ENCODE measurements at regions of chr15 and their contacts with region 1.

Region 1: DNA sequence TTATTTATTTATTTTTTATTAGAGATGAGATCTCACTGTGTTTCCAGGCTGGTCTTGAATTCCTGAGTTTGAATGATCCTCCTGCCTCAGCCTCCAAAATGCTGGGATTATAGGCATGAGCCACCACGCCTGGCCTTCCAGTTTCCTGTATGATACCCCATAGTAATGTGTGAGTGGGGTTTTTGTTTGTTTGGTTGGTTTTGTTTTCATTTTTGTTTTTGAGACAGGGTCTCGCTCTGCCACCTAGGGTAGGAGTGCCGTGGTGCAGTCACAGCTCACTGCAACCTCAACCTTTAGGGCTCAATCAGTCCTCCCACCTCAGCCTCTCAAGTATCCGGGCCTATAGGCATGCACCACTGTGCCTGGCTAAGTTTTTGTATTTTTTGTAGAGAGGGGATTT is 30.9 kb downstream of the GOLM2 start:
- DNase-seq: peak; percentile 47
- ATAC-seq: peak; percentile 98
- H3K4me3 ChIP-seq: no peak overlapping the region
- H3K27ac ChIP-seq: peak overlapping the region; percentile 71
- H3K4me1 ChIP-seq: peaks cover 5% of the 10 kb centered on the region
- H3K27me3 ChIP-seq: no peaks in the 10 kb centered on the region
- CTCF ChIP-seq: peak; percentile 76 to 81 (median 80)
- EP300 ChIP-seq: no peak
- POLR2A ChIP-seq: no peak
- RAD21 ChIP-seq: peak; percentile 83

Region 2: GRCh38 chr15:43903864-43904290 is 415.5 kb before region 1 on chr15:
- CTCF ChIA-PET with region 1: interaction called, 32 read pairs
- POLR2A ChIA-PET with region 1: no interaction called
- RAD21 ChIA-PET with region 1: interaction called, 5 read pairs
- SMC1A ChIA-PET with region 1: interaction called, 15 read pairs
- in situ Hi-C with region 1: no loop called
- intact Hi-C with region 1: loop called (anchors 2 kb)
- DNase-seq: peak; percentile 7
- ATAC-seq: peak; percentile 97
- H3K4me3 ChIP-seq: no peak overlapping the region
- H3K27ac ChIP-seq: no peak overlapping the region
- H3K4me1 ChIP-seq: no peaks in the 10 kb centered on the region
- H3K27me3 ChIP-seq: no peaks in the 10 kb centered on the region
- CTCF ChIP-seq: peak; percentile 75 to 89 (median 82)
- EP300 ChIP-seq: no peak
- POLR2A ChIP-seq: no peak
- RAD21 ChIP-seq: peak; percentile 99

Region 3: DNA sequence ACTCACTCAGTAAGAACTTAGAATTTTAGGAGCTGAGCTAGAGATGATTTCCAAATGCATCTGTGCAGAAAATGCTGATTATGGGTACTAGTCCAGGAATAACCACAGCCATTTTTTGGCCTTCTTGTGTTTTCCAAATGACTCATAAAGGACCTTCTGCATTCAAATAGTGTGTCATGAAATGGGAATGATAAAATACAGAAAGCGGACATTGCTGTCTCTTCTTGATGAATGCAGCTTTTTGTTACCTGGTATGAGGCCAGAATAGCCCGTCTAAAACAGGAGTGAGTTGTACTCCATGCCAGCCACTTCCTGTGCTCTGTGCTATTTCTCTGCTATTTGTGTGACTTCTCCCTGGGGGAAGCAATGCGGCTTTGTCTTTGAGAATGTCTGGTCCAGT is 103.8 kb before region 1 on chr15:
- CTCF ChIA-PET with region 1: interaction called, 77 read pairs
- POLR2A ChIA-PET with region 1: no interaction called
- RAD21 ChIA-PET with region 1: interaction called, 9 read pairs
- SMC1A ChIA-PET with region 1: interaction called, 60 read pairs
- in situ Hi-C with region 1: no loop called
- intact Hi-C with region 1: loop called (anchors 1 kb)
- DNase-seq: no peak
- ATAC-seq: no peak
- H3K4me3 ChIP-seq: no peak overlapping the region
- H3K27ac ChIP-seq: no peak overlapping the region
- H3K4me1 ChIP-seq: no peaks in the 10 kb centered on the region
- H3K27me3 ChIP-seq: no peaks in the 10 kb centered on the region
- CTCF ChIP-seq: no peak
- EP300 ChIP-seq: no peak
- POLR2A ChIP-seq: no peak
- RAD21 ChIP-seq: no peak

Region 4: GRCh38 chr15:44286814-44287452 is 32.5 kb before region 1 on chr15:
- CTCF ChIA-PET with region 1: interaction called, 68 read pairs
- POLR2A ChIA-PET with region 1: interaction called, 14 read pairs
- RAD21 ChIA-PET with region 1: interaction called, 60 read pairs
- SMC1A ChIA-PET with region 1: interaction called, 65 read pairs
- in situ Hi-C with region 1: no loop called
- intact Hi-C with region 1: loop called (anchors 1 kb)
- DNase-seq: no peak
- ATAC-seq: no peak
- H3K4me3 ChIP-seq: peak overlapping the region; percentile 96
- H3K27ac ChIP-seq: peak overlapping the region; percentile 97; the same call in 1 of the 2 replicates
- H3K4me1 ChIP-seq: peaks cover 3% of the 10 kb centered on the region; the same call in 1 of the 2 replicates
- H3K27me3 ChIP-seq: no peaks in the 10 kb centered on the region
- CTCF ChIP-seq: no peak
- EP300 ChIP-seq: no peak
- POLR2A ChIP-seq: no peak
- RAD21 ChIP-seq: no peak

Region 5: DNA sequence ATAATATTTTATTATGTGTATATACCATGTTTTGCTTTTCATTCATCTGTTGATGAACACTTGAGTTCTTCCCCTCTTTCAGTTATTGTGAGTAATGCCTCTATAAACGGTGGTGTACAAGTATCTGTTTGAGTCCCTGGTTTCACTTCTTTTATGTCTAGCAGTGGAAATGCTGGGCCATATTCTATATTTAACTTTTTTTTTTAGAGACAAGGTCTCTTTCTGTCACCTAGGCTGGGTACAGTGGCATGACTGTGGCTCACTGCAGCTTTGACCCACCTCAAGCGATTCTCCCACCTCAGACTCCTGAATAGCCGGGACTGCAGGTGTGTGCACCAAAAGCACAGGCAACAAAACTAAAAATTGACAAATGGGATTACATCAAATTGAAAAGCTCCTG is 11.0 kb before region 1 on chr15:
- CTCF ChIA-PET with region 1: interaction called, 19 read pairs
- POLR2A ChIA-PET with region 1: interaction called, 7 read pairs
- RAD21 ChIA-PET with region 1: interaction called, 12 read pairs
- SMC1A ChIA-PET with region 1: interaction called, 23 read pairs
- in situ Hi-C with region 1: no loop called
- intact Hi-C with region 1: no loop called
- DNase-seq: peak; percentile 73
- ATAC-seq: peak; percentile 93
- H3K4me3 ChIP-seq: peak overlapping the region; percentile 47
- H3K27ac ChIP-seq: peak overlapping the region; percentile 83
- H3K4me1 ChIP-seq: peaks cover 42% of the 10 kb centered on the region
- H3K27me3 ChIP-seq: no peaks in the 10 kb centered on the region
- CTCF ChIP-seq: no peak
- EP300 ChIP-seq: peak; percentile 76 to 94; a peak in 3 of 4 replicates
- POLR2A ChIP-seq: no peak
- RAD21 ChIP-seq: no peak

Measured in GM12878 (cell line).